ENCODE measurements at regions of chr2 and their contacts with region 1.

Region 1: GRCh38 chr2:28566521-28567041 is 70.7 kb downstream of the PLB1 start:
- DNase-seq: peak; percentile 92
- ATAC-seq: peak; percentile 98
- H3K4me3 Mint-ChIP-seq: peak overlapping the region; percentile 85
- H3K27ac Mint-ChIP-seq: peak overlapping the region; percentile 87
- H3K4me1 Mint-ChIP-seq: peaks cover 29% of the 10 kb centered on the region
- H3K27me3 Mint-ChIP-seq: peaks cover 8% of the 10 kb centered on the region

Region 2: GRCh38 chr2:28286678-28287077 is 279.9 kb before region 1 on chr2:
- CTCF ChIA-PET with region 1: no interaction called
- POLR2A ChIA-PET with region 1: no interaction called
- DNase-seq: no peak
- ATAC-seq: no peak
- H3K4me3 Mint-ChIP-seq: no peak overlapping the region
- H3K27ac Mint-ChIP-seq: no peak overlapping the region
- H3K4me1 Mint-ChIP-seq: no peaks in the 10 kb centered on the region
- H3K27me3 Mint-ChIP-seq: no peaks in the 10 kb centered on the region

Region 3: DNA sequence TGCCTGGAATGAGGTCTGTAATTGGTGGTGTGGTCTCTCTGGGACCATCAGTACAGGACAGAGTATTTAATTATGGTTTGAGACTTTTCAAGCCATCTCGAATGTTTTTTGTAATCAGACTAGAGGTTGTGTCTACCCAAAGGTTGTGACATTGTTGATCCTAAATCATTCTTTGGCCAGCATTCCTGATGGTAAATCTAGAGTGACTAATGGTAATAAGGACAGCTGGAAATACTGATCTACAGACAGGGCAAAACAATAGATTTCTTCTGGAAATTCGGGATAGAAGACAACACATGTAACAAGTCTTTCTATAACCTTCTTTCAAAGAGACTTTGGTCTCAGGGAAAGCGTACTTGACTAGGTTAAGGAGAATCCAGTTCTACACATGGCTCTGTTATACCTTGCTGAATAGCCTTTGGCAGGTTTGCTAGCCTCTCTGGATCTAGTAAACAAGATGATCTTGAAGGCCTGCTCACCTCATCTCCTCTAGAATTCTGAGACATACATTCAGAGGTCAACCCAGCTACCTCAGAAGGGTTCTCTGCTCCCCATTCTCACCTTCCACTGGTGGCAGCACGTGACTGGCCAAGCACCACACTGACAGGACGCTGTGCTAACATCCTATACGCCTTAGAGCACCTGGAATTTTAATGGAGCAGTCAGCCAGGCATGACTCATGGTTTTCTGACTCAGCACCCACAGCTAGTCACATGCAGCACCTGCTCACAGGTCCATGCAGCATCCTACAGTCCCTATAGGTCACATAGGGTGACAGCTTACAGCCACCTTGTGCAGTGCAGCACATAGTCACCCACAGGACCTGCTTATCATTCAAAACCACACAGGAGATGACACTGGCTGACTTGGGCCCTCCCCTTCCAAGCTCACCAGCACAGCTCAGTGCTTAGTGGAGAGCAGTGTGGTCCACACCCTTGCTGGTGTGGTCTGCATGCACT is 58.5 kb before region 1 on chr2:
- CTCF ChIA-PET with region 1: no interaction called
- POLR2A ChIA-PET with region 1: no interaction called
- DNase-seq: peak; percentile 74
- ATAC-seq: peak; percentile 98
- H3K4me3 Mint-ChIP-seq: no peak overlapping the region
- H3K27ac Mint-ChIP-seq: peak overlapping the region; percentile 71
- H3K4me1 Mint-ChIP-seq: peaks cover 23% of the 10 kb centered on the region
- H3K27me3 Mint-ChIP-seq: peaks cover 35% of the 10 kb centered on the region

Region 4: DNA sequence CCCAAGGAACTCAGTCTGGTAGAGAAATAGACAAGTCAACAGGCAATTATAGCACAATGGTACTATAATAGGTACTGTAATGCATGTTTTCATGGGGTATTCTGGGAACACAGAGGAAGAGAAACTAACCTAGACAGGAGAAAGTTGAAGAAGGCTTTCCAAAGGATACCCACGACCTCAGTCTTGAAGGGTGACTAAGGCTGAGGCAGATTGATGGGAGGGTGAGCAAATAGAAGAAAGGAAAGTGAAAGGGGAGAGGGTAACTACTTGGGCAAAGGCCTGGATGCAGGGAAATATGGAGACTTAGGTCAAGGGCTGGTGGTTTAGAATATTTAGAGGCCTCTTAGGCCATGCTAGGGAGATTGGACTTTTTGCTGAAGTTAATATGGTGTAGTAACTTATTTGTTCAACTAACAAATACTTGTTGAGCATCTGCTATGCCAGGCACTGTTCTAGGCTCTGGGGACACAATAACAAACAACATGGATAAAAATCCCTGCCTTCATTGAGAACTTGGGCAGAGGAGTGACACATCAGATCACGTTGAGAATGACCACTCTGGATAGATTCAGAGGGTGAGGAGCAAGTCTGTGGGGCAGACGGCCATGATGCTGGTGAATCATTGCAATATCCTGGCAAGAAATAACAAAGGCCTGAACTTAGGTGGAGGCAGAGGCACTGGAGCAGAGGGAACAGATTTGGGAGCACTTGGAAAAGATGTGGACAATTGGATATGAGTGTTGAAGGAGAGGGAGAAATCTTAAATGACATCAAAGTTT is 14.3 kb before region 1 on chr2:
- CTCF ChIA-PET with region 1: interaction called, 8 read pairs
- POLR2A ChIA-PET with region 1: interaction called, 10 read pairs
- DNase-seq: no peak
- ATAC-seq: peak; percentile 27
- H3K4me3 Mint-ChIP-seq: no peak overlapping the region
- H3K27ac Mint-ChIP-seq: no peak overlapping the region
- H3K4me1 Mint-ChIP-seq: peaks cover 19% of the 10 kb centered on the region
- H3K27me3 Mint-ChIP-seq: peaks cover 2% of the 10 kb centered on the region

Region 5: GRCh38 chr2:28577791-28578680 is 11.5 kb after region 1 on chr2:
- CTCF ChIA-PET with region 1: interaction called, 32 read pairs
- POLR2A ChIA-PET with region 1: no interaction called
- DNase-seq: no peak
- ATAC-seq: no peak
- H3K4me3 Mint-ChIP-seq: no peak overlapping the region
- H3K27ac Mint-ChIP-seq: peak overlapping the region; percentile 46
- H3K4me1 Mint-ChIP-seq: peaks cover 12% of the 10 kb centered on the region
- H3K27me3 Mint-ChIP-seq: peaks cover 3% of the 10 kb centered on the region

Region 6: GRCh38 chr2:28583899-28584553 is 17.4 kb after region 1 on chr2:
- CTCF ChIA-PET with region 1: interaction called, 32 read pairs
- POLR2A ChIA-PET with region 1: interaction called, 5 read pairs
- DNase-seq: peak; percentile 62
- ATAC-seq: peak; percentile 33
- H3K4me3 Mint-ChIP-seq: no peak overlapping the region
- H3K27ac Mint-ChIP-seq: no peak overlapping the region
- H3K4me1 Mint-ChIP-seq: peaks cover 61% of the 10 kb centered on the region
- H3K27me3 Mint-ChIP-seq: no peaks in the 10 kb centered on the region

Region 7: DNA sequence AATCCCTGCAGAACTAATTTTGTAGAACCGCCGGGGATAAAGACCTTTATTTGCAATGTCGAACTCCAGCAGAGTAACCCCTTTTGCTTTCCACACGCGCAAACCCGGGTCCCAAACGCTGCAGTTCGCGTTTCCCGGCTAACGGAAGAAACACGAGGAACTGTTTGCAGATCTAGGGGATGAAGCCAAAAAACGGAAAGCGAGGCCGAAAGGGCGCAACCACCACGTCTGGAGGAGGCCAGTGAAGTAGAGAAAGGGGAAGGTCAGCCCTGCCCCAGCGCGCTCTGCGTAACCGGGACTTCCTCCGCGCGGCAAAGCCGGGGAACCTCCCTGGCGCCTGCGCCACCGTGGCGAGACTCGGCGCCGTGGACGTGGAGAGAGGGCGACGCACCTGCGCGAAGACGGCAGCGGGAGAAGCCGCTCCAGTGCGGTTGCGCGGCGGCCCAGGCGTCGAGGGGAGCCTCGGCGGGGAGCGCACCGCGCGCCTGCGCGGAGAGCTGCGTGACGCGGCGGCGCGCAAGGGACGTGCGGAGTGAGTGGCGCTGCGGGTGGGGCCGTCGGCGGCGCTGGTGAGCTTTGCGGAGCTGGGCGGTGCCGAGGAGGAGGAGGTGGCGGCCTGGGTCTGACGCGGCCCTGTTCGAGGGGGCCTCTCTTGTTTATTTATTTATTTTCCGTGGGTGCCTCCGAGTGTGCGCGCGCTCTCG is 184.8 kb after region 1 on chr2 and contains the start of gene PPP1CB:
- CTCF ChIA-PET with region 1: interaction called, 20 read pairs
- POLR2A ChIA-PET with region 1: interaction called, 5 read pairs
- DNase-seq: peak; percentile 95
- ATAC-seq: peak; percentile 86
- H3K4me3 Mint-ChIP-seq: peak within 1 kb of the TSS; percentile 87
- H3K27ac Mint-ChIP-seq: peak within 1 kb of the TSS; percentile 97
- H3K4me1 Mint-ChIP-seq: peaks cover 50% of the 10 kb centered on the region
- H3K27me3 Mint-ChIP-seq: no peaks in the 10 kb centered on the region
- total RNA-seq, gene PPP1CB: 174 to 183 TPM

Region 8: DNA sequence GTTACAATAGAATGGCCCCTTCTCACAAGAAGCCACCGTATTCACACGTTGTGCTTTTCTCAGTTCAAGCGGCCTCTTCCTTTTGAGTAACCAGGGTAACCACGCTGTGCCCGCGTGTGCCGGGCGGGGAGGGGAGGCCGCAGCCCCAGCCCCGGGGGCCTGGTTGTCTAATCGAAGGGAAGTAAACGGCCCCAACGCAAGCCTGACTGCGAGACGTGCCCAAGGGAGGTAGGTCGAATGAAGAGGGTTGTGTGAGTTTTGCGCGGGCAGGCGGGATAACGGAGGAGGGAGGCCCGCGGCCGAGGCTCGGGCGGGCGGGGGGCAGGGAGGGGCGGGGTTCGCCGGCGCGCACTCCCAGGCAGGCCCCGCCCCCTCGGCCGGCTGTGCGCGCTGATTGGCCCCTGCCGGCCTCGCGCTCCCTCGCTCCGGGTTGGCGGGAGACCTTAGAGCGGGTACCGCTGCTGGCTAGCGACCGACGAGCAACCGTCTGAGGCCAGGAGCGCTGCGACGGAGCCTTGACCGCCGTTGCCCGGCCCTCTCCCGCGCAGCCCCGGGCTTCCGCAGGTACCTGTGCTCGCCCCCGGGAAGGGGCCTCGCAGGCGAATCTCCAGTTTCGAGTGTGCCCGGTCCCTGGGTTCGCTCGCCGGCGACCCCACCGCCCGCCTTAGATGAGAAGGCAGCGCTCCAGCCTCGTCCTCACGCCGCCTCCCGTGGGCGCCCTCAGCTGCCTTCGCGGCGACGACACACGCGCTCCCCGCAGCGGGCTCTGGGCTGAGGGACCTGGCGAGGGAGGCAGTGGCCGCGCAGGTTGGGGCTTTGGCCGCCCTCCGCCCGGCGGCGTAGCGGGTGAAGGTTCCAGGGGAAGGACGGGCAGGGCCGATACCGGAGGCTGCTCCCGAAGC is 244.1 kb after region 1 on chr2 and contains the start of gene SPDYA:
- CTCF ChIA-PET with region 1: interaction called, 13 read pairs
- POLR2A ChIA-PET with region 1: no interaction called
- DNase-seq: peak; percentile 84
- ATAC-seq: peak; percentile 96
- H3K4me3 Mint-ChIP-seq: peak within 1 kb of the TSS; percentile 73
- H3K27ac Mint-ChIP-seq: peak within 1 kb of the TSS; percentile 67
- H3K4me1 Mint-ChIP-seq: peaks cover 16% of the 10 kb centered on the region
- H3K27me3 Mint-ChIP-seq: peaks cover 2% of the 10 kb centered on the region
- total RNA-seq, gene SPDYA: 1.2 TPM

Measured in activated CD8-positive, alpha-beta T cell treated with anti-CD3 and anti-CD28 coated beads, Interleukin-2, amount 10 ng/mL, durations not matched to agents 7 days and 5 days (primary cell).